Sigmoid colon (tissue), 7 donors: ENCODE measurements at regions of chr3 and their contacts with region 1.

Region 1: DNA sequence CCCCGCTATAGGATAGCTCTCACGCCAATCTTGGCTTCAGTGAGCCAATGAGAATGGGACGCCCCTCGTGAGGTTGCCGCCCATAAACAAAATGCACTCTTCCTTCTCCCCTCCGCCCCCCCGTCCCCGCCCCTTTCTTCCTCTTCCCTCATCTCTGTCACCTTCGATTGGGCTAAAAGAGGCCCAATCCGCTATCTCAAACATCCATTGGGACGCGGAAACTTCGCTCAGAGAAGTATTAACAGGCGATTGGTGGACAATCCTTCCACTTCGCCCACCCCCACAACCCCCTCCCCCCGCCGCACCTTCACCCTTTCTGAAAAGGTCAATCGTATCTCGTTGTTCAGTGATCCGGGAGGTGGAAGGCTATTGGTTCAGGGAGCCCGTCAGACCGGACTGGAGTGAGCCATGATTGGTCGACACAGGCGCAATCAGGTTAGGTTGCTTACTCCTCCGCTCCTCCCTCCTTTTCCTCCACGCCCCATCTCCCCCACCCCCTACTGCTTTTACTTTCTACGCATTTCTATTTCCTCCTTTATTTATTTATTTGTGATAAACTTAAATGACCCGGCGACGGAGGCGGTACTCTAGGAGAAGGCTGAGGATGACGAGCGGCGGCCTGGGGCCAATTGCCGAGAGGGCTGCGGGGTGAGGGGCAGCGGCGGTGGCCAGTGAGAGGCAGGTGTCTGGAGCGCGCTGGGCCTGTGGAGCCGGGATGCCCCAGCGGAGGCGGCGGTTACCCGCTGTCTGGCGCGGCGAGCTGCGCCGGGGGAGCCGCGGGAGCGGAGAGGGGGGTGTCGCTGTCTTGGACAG is 447 bp upstream of the ZBTB20 start:
- DNase-seq: peak; percentile 100
- H3K4me3 ChIP-seq: peak overlapping the region; percentile 84 to 94 (median 92)
- H3K27ac ChIP-seq: peak overlapping the region; percentile 98 to 99 (median 99)
- H3K4me1 ChIP-seq: peaks cover 0 to 29% (median 19%) of the 10 kb centered on the region in 4 donors
- H3K27me3 ChIP-seq: no peaks in the 10 kb centered on the region
- CTCF ChIP-seq: no peak
- EP300 ChIP-seq: peak in 1 of 4 donors; percentile 22
- POLR2A ChIP-seq: peak; percentile 76 to 87

Region 2: DNA sequence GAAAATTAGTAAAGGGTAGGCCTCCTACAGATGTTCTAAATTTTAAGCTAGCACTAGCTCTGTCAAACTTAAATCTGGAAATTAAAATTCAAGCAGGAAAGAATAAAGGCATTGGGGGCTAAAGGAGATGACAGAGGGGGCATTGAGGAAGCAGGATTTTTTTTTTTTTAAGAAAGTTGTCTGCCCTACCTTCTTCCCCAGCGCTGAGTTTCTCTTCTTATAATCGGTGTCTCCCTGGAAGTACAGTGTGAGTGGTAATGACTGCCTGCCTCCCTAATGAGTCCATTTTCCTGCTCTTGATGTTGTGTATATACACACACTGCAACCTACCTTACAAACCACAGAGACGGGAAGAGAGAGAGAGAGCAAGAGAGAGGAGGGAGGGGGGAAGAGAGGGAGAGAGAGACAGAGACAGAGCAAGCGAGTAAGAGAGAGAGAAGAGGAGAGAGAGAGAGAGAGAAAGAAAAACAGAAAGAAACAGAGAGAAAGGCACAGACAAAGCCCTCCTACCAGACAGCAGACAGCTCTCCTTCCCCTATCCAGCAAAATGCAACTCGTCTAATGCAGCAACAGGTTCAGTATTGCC is 47.5 kb before region 1 on chr3:
- intact Hi-C with region 1: loop called (anchors 5 kb)
- DNase-seq: no peak
- H3K4me3 ChIP-seq: peak overlapping the region; percentile 11 to 45 (median 38)
- H3K27ac ChIP-seq: peak overlapping the region; percentile 48 to 78 (median 72)
- H3K4me1 ChIP-seq: peaks cover 0 to 47% (median 18%) of the 10 kb centered on the region in 4 donors
- H3K27me3 ChIP-seq: no peaks in the 10 kb centered on the region
- CTCF ChIP-seq: no peak
- EP300 ChIP-seq: no peak
- POLR2A ChIP-seq: no peak

Region 3: GRCh38 chr3:115658337-115659181 is 511.0 kb after region 1 on chr3:
- intact Hi-C with region 1: loop called (anchors 5 kb)
- DNase-seq: peak; percentile 90
- H3K4me3 ChIP-seq: peak overlapping the region; percentile 60 to 85 (median 81)
- H3K27ac ChIP-seq: peak overlapping the region; percentile 96 to 98 (median 96)
- H3K4me1 ChIP-seq: peaks cover 0 to 22% (median 19%) of the 10 kb centered on the region in 4 donors
- H3K27me3 ChIP-seq: no peaks in the 10 kb centered on the region
- CTCF ChIP-seq: no peak
- EP300 ChIP-seq: no peak
- POLR2A ChIP-seq: peak in 1 of 2 donors; percentile 34